Activated CD4-positive, alpha-beta T cell treated with anti-CD3 and anti-CD28 coated beads for 36 hours (primary cell): ENCODE measurements at regions of chr4 and their contacts with region 1.

Region 1: DNA sequence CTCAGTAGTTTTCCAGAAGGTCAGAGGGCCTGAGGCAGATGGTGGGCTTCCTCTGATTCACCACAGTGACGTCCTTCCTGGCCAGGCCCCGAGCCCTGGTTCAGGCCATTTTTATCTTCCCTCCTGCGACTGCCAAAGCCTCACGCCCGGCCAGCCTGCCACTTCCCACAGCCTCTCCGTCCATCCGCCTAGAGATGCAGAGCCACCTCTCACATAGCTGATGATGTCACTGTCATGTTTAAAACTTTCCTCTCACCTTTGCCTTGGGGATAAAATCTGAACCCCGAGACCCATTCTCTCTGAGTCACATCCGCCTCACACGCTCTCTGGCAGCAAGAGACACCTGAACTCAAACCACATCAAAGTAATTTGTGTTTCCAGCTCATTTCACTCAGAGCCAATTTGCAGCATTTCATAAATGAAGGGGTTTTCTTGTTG is 175.3 kb downstream of the QDPR start:
- DNase-seq: peak; percentile 86
- ATAC-seq: peak; percentile 93
- H3K4me3 Mint-ChIP-seq: peak overlapping the region; percentile 54
- H3K27ac Mint-ChIP-seq: peak overlapping the region; percentile 92
- H3K4me1 Mint-ChIP-seq: peaks cover 45% of the 10 kb centered on the region
- H3K27me3 Mint-ChIP-seq: no peaks in the 10 kb centered on the region

Region 2: DNA sequence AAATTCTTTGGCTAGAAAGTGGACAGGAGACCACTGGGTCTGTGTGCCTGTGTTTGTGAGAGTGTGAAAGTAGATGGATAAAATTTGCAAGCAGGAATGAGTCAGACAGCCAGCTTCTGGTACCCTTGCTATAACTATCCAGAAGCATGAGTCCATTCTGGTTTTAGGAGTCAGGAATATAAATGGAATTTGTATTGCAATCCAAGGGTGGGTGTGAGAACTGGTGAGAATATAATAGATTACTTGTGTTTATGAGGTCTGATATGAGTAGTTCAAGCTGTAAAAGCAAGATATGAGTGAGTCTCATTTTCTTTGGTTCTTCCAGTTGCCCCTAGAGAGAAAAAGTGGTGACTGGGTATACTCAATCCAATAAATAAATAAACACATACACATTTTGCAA is 897.6 kb before region 1 on chr4:
- CTCF ChIA-PET with region 1: no interaction called
- POLR2A ChIA-PET with region 1: no interaction called
- intact Hi-C with region 1: no loop called
- DNase-seq: no peak
- ATAC-seq: no peak
- H3K4me3 Mint-ChIP-seq: no peak overlapping the region
- H3K27ac Mint-ChIP-seq: no peak overlapping the region
- H3K4me1 Mint-ChIP-seq: no peaks in the 10 kb centered on the region
- H3K27me3 Mint-ChIP-seq: peaks cover 4% of the 10 kb centered on the region

Region 3: DNA sequence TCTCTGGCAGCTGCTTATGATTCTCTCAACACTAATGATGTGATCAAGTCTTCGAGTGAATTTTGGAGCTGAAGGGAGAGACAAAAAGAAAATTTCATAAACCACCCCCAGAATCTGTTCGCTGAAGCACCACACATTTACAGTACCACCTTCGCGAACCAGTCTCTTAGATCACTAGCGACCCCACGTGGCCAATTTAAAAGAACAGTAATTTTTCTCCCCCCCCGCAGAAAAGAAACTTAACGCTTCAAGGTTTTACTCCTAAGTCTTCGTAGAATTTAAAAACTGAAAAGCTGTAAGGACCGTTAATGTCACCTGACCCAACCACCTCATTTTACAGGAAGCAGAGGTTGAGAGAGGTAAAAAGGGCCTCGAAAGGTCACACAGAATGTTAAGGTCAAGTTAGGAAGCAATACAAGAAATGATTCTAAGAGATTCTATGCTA is 12.1 kb before region 1 on chr4:
- CTCF ChIA-PET with region 1: interaction called, 3 read pairs
- POLR2A ChIA-PET with region 1: no interaction called
- intact Hi-C with region 1: loop called in 1 of 2 experiments (anchors 1 kb)
- DNase-seq: peak; percentile 75
- ATAC-seq: peak; percentile 84
- H3K4me3 Mint-ChIP-seq: no peak overlapping the region
- H3K27ac Mint-ChIP-seq: peak overlapping the region; percentile 32
- H3K4me1 Mint-ChIP-seq: peaks cover 14% of the 10 kb centered on the region
- H3K27me3 Mint-ChIP-seq: no peaks in the 10 kb centered on the region

Region 4: DNA sequence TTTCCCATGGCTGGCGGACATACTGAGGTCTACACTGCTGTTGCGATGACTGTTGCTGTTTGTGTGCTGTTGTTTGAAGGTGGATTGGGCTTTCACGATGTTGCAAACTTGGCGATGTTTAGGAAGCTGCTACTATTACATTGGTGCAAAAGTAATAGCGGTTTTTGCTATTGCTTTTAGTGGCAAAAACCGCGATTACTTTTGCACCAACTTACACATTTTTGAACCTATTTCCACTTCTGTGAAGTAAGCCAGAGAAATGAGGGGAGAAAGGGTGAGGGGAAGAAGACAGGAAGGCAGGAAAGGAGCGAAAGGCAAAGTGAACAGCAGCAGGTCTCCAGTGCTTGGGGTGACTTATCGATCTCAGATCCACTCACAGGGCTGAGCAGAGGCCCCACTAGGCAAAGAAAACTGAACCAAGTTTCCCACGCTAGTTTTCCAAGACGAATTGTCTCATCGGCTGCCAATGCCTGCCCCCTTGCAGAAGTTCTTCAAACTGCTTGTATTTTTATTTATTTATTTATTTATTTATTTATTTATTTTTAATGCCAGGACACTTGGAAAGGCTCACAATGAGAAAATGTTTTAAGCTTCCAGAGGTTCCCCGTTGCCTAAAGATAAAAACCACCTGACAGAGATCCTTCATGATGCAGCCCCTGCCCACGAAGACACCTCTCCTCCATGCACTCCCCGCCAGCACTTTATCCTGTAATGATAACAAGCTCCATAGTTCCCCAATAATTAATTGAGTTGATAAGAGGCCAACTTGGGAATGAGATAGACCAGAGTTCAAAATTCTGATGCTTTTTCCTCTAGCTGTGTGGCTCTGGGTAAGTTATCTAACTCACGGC is 132.1 kb after region 1 on chr4:
- CTCF ChIA-PET with region 1: interaction called, 3 read pairs
- POLR2A ChIA-PET with region 1: no interaction called
- intact Hi-C with region 1: loop called in 1 of 2 experiments (anchors 5 kb)
- DNase-seq: peak; percentile 23
- ATAC-seq: no peak
- H3K4me3 Mint-ChIP-seq: no peak overlapping the region
- H3K27ac Mint-ChIP-seq: no peak overlapping the region
- H3K4me1 Mint-ChIP-seq: peaks cover 2% of the 10 kb centered on the region
- H3K27me3 Mint-ChIP-seq: no peaks in the 10 kb centered on the region

Region 5: GRCh38 chr4:17576932-17577665 is 240.6 kb after region 1 on chr4 and contains the start of gene LAP3:
- CTCF ChIA-PET with region 1: no interaction called
- POLR2A ChIA-PET with region 1: interaction called, 5 read pairs
- intact Hi-C with region 1: loop called in 1 of 2 experiments (anchors 2 kb)
- DNase-seq: peak; percentile 99
- ATAC-seq: peak; percentile 85
- H3K4me3 Mint-ChIP-seq: peak within 1 kb of the TSS; percentile 91
- H3K27ac Mint-ChIP-seq: peak within 1 kb of the TSS; percentile 94
- H3K4me1 Mint-ChIP-seq: peaks cover 29% of the 10 kb centered on the region
- H3K27me3 Mint-ChIP-seq: no peaks in the 10 kb centered on the region
- total RNA-seq, gene LAP3: 126 to 128 TPM